A549 (cell line): ENCODE measurements at regions of chr2 and their contacts with region 1.

Region 1: DNA sequence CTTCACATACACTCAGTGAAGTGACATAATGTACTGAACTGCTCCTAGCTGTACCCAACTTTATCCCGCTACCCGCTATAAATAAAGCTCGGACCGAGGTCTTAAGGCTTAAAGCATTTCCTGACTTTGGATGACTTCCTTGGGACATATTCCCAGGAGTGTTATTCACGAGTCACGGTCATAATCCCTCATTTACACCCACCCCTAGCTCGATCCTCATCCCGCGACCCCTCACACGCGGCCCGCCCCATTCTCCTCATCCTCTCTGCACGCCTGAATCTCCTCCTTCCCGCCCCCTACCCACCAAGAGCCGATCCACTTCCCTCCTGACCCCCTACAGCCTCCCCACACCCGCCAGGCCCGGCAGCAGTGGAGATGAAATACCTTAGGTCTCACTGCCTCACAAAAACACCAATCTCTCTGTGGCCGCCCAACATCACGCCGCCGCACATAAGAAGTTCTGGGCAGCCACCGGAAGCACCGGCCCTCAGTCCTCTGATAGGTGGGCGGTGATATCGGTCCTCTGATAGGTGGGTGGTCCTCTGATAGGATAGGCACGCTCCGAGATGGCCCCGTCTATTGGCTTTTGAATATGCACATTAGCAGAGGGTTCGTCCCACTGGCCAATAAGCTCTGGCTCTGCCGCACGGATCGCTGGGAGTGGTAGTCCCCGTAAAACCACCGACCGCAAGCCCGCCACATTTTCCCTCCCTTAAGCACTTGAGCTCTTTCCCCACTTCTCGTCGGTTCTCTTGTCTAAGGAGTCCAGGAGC is at the start of gene WDCP:
- DNase-seq: peak; percentile 93 to 99
- ATAC-seq: peak; percentile 92 to 98
- H3K4me3 ChIP-seq: peak within 1 kb of the TSS; percentile 66
- H3K27ac ChIP-seq: peak within 1 kb of the TSS; percentile 70 to 85
- H3K4me1 ChIP-seq: peaks cover 24% of the 10 kb centered on the region
- CTCF ChIP-seq: no peak
- EP300 ChIP-seq: no peak
- POLR2A ChIP-seq: peak; percentile 90
- RAD21 ChIP-seq: no peak
- polyA plus RNA-seq, gene WDCP: 20.8 and 30.1 TPM in 2 replicates

Region 2: GRCh38 chr2:24015562-24016346 is 31.4 kb before region 1 on chr2:
- CTCF ChIA-PET with region 1: no interaction called
- POLR2A ChIA-PET with region 1: interaction called, 10 read pairs
- DNase-seq: peak; percentile 77 to 95
- ATAC-seq: peak; percentile 91 to 92
- H3K4me3 ChIP-seq: peak overlapping the region; percentile 12; the same call in 1 of the 3 replicates
- H3K27ac ChIP-seq: peak overlapping the region; percentile 89 to 94
- H3K4me1 ChIP-seq: peaks cover 64% of the 10 kb centered on the region
- CTCF ChIP-seq: no peak
- EP300 ChIP-seq: peak; percentile 76 to 77; a peak in 3 of 5 replicates
- POLR2A ChIP-seq: 0 out of 2 replicates have a peak, but pooled peaks have one; percentile 6
- RAD21 ChIP-seq: peak; percentile 42 to 43; a peak in 4 of 5 replicates

Region 3: DNA sequence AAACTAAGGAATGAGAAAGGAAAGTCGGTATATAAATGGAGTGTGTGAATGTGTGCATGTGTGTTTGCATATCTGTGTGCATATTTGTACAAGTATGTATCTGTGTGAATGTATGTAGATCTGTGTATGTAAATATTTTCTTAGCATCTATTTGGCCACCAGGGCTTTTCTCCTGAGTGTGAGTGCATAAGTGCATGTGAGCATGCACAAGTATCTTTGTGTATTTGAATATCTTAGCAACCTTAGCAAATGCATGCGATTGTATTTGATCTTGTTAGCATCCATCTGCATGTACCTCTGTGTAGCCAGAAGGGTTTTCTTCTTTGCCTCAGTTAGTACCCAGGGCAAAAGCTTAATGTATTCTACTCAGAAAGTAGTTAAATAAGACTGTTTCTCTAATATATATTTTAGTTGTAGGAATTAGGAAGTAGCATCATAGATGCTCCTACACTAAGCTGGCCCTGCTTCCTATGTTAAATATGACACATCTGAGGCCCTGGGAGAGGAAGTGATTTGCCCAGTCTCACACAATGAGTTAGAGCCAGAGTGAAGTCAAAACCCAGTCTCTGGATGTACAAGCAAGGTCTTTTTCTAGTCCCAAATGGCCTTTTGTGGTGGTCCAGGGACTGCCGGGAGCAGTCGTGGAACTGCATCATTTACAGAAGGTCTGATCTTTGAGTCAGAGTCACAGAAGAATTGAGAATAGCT is 11.6 kb after region 1 on chr2:
- CTCF ChIA-PET with region 1: interaction called, 30 read pairs
- POLR2A ChIA-PET with region 1: interaction called, 6 read pairs
- DNase-seq: no peak
- ATAC-seq: peak in 1 of 2 experiments; percentile 25; a peak in 2 of 6 replicates
- H3K4me3 ChIP-seq: no peak overlapping the region
- H3K27ac ChIP-seq: no peak overlapping the region
- H3K4me1 ChIP-seq: peaks cover 7% of the 10 kb centered on the region; the same call in 1 of the 3 replicates
- CTCF ChIP-seq: no peak
- EP300 ChIP-seq: no peak
- POLR2A ChIP-seq: no peak
- RAD21 ChIP-seq: no peak

Region 4: DNA sequence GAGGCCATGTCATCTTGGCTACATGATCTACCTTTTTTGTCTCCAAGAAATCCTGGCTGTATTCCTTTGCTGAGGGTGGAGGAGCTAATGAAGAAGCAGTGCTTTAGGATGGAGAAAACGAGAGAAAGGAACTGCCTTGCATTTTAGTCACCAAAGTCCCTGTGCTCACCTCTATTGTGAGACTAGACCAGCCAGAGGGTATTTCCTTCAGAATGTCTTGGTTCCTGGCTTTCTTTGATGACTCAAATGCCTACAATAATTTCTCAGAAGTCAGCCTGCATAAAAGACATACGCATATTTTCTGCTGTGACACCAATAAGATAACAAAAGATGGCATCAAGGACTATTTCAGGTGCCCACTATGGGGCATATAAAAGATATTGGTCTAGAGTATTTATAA is 18.2 kb after region 1 on chr2:
- CTCF ChIA-PET with region 1: interaction called, 30 read pairs
- POLR2A ChIA-PET with region 1: interaction called, 4 read pairs
- DNase-seq: no peak
- ATAC-seq: no peak
- H3K4me3 ChIP-seq: no peak overlapping the region
- H3K27ac ChIP-seq: no peak overlapping the region
- H3K4me1 ChIP-seq: no peaks in the 10 kb centered on the region
- CTCF ChIP-seq: no peak
- EP300 ChIP-seq: no peak
- POLR2A ChIP-seq: no peak
- RAD21 ChIP-seq: no peak

Region 5: DNA sequence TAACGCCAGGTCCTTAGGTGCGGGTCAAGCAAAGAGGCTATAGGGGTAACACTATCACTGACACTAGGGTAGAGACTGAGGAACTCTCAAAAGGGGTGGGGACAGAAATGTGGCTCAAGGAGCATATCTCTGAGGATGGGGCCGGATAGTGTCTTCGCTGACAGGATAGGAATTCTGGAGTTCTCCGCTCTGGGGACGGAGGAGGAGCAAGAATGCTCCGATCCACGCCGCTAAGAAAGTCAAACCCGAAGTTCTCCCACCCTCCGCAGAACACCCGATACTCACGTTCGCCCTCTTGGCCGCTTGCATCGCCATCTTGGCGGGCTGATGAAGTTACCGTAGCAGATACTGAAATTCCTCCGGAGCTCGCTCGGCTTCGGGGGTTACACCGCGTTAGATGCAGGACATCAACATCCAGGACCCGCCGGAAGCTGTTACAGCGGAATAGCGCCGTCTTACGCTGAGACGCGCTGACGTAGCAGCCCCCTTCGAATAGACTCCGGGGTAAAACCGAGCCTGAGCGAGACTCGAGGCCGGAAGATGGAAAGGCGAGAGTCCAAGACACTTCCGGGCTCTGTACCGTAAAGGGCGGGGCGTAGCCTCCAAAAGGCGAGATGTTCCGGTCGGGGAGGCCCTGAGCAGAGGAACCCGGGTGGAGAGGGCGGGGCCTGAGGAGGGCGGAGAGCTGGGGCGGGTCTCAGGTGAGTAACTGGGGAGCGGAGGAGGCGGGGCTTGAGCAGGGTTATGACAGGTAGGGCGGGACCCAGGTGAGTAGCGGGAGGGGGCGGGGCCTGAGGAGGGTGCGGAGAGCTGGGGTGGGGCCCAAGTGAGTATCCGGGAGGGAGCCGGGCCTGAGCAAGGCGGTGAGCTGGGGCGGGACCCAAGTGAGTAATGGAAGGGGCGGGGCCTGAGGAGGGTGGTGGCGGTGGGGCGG is 29.1 kb after region 1 on chr2 and contains the start of gene SF3B6:
- CTCF ChIA-PET with region 1: no interaction called
- POLR2A ChIA-PET with region 1: interaction called, 14 read pairs
- DNase-seq: peak; percentile 92 to 99
- ATAC-seq: peak; percentile 91 to 94
- H3K4me3 ChIP-seq: peak within 1 kb of the TSS; percentile 82
- H3K27ac ChIP-seq: peak within 1 kb of the TSS; percentile 84 to 85
- H3K4me1 ChIP-seq: peaks cover 19% of the 10 kb centered on the region
- CTCF ChIP-seq: no peak
- EP300 ChIP-seq: no peak
- POLR2A ChIP-seq: peak; percentile 88
- RAD21 ChIP-seq: peak; percentile 28 to 31; a peak in 3 of 5 replicates
- polyA plus RNA-seq, gene SF3B6: 296 and 315 TPM in 2 replicates